Ascending aorta (tissue), 2 donors: ENCODE measurements at regions of chr2 and their contacts with region 1.

Region 1: GRCh38 chr2:32715391-32715841 is 87.6 kb downstream of the TTC27 start:
- DNase-seq: no peak
- H3K4me3 ChIP-seq: no peak overlapping the region
- H3K27ac ChIP-seq: peak overlapping the region; percentile 72 to 80
- H3K4me1 ChIP-seq: peaks cover 14 to 38% of the 10 kb centered on the region in 2 donors
- H3K27me3 ChIP-seq: no peaks in the 10 kb centered on the region
- CTCF ChIP-seq: no peak

Region 2: GRCh38 chr2:32425719-32426141 is 289.7 kb before region 1 on chr2:
- intact Hi-C with region 1: no loop called
- DNase-seq: no peak
- H3K4me3 ChIP-seq: peak overlapping the region; percentile 21 to 48
- H3K27ac ChIP-seq: peak overlapping the region; percentile 80 to 82
- H3K4me1 ChIP-seq: peaks cover 0 to 54% of the 10 kb centered on the region in 2 donors
- H3K27me3 ChIP-seq: no peaks in the 10 kb centered on the region
- CTCF ChIP-seq: no peak

Region 3: GRCh38 chr2:32572737-32573136 is 142.7 kb before region 1 on chr2:
- intact Hi-C with region 1: no loop called
- DNase-seq: no peak
- H3K4me3 ChIP-seq: no peak overlapping the region
- H3K27ac ChIP-seq: no peak overlapping the region
- H3K4me1 ChIP-seq: no peaks in the 10 kb centered on the region
- H3K27me3 ChIP-seq: no peaks in the 10 kb centered on the region
- CTCF ChIP-seq: no peak

Region 4: DNA sequence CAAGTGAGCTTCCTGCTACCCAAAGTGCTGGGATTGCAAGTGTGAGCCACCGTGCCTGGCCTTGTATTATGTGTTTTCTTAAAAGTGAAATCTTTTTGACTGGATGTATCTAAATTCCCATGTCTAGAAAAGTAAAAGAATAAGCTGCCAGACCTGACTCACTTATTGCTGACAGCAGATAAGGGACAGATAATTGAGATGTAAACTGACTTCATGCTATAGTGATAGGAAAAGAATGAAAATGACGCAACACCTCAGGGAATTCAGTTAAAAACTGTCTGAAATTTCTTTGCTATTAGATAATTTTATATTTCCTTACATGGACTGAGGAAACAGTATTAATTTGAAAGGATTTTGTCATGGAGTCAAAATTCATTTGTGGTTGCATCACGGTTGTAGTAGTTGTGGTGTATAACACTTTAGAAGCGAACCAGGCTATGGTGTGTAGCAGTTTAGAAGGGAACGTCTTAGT is 68.2 kb before region 1 on chr2:
- intact Hi-C with region 1: loop called (anchors 2 kb)
- DNase-seq: no peak
- H3K4me3 ChIP-seq: no peak overlapping the region
- H3K27ac ChIP-seq: peak overlapping the region; percentile 82 to 84
- H3K4me1 ChIP-seq: peaks cover 0 to 9% of the 10 kb centered on the region in 2 donors
- H3K27me3 ChIP-seq: no peaks in the 10 kb centered on the region
- CTCF ChIP-seq: no peak

Region 5: DNA sequence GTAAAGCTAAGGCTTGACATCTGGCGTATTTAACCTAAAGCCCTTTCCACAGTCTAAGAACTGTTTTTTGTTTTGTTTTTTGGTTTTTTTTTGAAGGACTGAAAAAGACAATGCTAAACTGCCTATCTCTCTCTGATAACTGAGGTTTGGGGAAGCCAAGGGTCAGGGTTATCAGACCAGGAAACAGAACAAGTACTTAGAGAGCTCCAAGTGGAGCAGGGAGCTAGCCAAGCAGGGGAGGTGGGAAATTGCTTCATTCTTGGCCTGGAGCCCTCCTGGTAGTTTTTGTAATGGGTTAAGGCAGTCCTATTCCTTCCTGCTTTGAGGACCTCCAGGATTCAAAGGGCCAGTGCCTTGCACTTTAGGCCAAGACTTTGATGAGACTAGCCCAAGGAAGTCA is 77.0 kb after region 1 on chr2:
- intact Hi-C with region 1: no loop called
- DNase-seq: no peak
- H3K4me3 ChIP-seq: no peak overlapping the region
- H3K27ac ChIP-seq: no peak overlapping the region
- H3K4me1 ChIP-seq: no peaks in the 10 kb centered on the region
- H3K27me3 ChIP-seq: no peaks in the 10 kb centered on the region
- CTCF ChIP-seq: no peak

Region 6: DNA sequence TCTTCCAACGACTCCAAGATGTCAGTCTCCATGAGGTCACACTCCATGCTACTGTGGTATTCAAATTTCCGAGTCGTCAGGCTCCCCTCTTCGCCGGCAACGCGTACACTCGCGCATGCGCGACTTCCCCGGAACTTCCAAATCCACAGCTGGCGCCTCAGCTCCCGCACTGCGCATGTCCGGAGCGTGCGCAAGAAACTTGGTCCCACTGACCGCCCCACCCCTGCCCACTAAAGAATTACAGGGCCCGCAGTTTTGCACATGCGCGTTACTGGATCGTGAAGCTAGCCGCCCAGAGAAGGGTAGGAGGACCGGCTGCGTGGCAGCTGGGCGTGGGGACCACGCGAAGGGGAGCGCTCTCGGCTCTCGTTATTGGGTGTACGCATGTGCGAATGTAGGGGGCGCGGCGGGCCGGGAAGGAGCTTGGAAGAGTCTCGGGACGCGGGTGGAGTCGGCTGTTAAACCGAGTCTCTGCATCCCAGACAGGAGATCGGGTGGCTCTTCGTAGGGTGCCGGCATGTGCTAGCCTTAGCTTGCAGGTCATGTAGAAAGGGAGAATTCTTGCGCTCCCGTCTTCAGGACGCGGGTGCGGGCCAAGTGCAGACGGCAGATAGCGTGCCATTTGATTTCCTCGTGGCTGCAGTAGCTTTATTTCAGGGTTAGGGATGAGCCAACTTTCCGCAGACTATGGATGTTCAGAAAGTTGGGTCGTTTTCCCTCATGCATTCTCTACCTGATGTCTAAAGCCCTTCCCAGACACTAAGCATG is 883.9 kb after region 1 on chr2 and contains the start of gene FAM98A:
- intact Hi-C with region 1: loop called (anchors 5 kb)
- DNase-seq: peak; percentile 93 to 99
- H3K4me3 ChIP-seq: peak within 1 kb of the TSS; percentile 67 to 100
- H3K27ac ChIP-seq: peak within 1 kb of the TSS; percentile 80 to 90
- H3K4me1 ChIP-seq: peaks cover 3 to 10% of the 10 kb centered on the region in 2 donors
- H3K27me3 ChIP-seq: no peaks in the 10 kb centered on the region
- CTCF ChIP-seq: no peak
- total RNA-seq, gene FAM98A: 34.8 TPM